ENCODE measurements at regions of chr20 and their contacts with region 1.

Region 1: GRCh38 chr20:45987108-45987780 is 15.2 kb upstream of the ZNF335 start:
- DNase-seq: peak; percentile 87
- CTCF ChIP-seq: peak; percentile 91

Region 2: GRCh38 chr20:45695496-45695895 is 291.7 kb before region 1 on chr20:
- CTCF ChIA-PET with region 1: no interaction called
- POLR2A ChIA-PET with region 1: no interaction called
- DNase-seq: no peak
- CTCF ChIP-seq: no peak

Region 3: DNA sequence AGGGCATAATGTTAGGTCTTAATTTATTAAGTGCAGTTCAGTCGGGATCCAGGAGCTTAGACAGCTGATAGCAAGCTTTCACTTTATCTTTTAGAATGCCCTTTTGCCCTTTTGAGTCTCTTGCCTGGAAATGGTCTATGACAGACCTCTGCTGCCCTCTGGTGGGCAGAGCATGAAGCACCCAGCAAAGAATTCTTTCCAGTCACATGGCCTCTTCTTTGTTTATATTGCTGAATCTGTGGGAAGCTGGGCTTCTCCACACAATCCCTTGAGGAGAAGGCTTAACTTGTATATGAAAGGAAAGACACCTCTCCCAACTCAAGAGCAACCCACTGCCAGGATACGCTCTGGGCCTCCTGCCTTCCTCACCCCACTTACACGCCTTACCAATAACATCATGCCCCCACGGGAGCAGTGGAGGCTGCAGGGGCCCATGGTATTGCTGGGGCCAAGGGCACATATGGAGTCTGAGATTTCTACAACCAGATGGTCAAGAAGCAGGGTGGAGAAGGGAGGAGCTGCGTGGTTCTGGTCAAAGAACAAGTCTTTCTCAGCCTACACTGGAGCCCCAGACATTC is 216.0 kb before region 1 on chr20:
- CTCF ChIA-PET with region 1: no interaction called
- POLR2A ChIA-PET with region 1: no interaction called
- DNase-seq: peak; percentile 80
- CTCF ChIP-seq: peak; percentile 92

Region 4: DNA sequence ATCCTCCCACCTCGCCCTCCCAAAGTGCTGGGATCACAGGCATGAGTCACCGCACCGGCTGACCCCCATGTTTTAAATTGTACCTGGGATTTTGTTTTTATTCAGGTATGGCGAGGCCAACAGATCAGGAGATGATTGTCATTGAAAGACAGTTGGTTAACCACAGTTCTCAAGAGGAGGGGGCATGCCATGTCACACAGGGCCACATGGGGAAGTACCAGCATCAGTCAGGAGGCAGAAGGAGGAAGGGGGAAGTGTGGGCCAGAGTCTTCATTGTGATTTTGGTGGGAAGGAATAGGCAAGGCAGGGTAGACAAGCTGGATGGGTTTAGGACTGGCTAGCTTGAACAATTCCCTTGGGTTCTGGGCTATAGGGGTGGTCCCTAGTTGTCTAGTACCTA is 11.5 kb after region 1 on chr20:
- CTCF ChIA-PET with region 1: interaction called, 53 read pairs
- POLR2A ChIA-PET with region 1: no interaction called
- DNase-seq: no peak
- CTCF ChIP-seq: no peak

Region 5: DNA sequence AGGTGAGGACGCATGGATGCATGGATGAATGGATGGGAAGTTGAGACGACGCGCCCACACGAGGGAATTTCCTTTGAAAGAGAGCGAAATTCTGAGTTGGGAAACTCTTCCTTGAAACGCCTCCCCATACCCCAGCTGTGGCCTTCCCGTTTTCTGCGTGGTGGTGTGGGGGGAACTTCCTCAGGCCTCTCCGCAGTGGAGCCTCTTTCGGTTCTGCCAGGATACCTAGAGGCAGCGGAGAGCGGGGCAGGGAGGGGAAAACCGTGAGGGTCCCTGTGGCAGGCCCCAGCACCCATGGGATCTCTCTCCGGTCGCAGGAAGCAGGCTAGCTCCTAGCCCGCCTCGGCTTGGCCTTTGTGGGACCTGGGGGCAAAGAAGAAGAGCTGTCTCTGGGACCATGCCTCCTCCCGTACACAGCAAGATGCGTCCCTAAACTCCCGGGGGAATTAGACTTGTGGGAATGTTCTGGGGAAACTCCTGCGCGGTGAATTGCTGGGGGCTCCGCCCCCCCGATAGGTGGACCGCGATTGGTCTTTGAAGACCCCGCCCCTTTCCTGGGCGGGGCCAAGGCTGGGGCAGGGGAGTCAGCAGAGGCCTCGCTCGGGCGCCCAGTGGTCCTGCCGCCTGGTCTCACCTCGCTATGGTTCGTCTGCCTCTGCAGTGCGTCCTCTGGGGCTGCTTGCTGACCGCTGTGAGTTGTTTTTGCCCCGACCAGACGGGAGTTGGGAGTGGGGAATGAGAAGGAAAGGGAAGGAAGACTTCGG is 130.6 kb after region 1 on chr20 and contains the start of gene CD40:
- CTCF ChIA-PET with region 1: interaction called, 10 read pairs
- POLR2A ChIA-PET with region 1: no interaction called
- DNase-seq: peak; percentile 95
- CTCF ChIP-seq: no peak

Region 6: DNA sequence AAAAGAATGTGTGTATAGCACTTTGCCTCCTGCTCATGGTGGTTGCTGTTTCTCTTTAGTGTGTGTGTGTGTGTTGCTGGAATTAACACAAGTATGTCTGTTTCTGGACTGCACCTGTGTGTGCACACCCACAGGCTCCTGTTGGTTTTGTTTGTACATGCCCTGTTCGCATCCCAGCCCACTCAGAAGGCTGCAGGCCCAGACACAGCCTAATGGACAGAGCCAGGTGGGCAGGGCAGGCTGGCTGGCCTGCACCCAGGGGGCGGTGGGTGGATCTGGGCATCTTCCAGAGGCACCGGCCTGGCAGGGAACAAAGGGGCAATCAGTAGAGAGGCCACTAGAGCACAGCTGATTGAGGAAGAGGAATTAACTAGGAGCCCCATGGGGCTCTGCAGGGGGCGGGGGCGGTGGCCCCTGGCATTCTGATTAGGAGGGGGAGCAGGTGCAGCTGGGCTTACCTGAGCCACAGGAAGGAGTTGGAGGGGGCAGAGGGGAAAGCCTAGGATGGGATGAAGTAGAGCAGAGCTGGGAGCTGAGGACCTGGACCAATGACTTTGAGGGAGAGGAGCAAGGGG is 152.8 kb after region 1 on chr20:
- CTCF ChIA-PET with region 1: no interaction called
- POLR2A ChIA-PET with region 1: no interaction called
- DNase-seq: no peak
- CTCF ChIP-seq: no peak

Measured in GM10248 (cell line).